Left ventricle myocardium inferior (tissue), 1 donor: ENCODE measurements at regions of chr17 and their contacts with region 1.

Region 1: GRCh38 chr17:56939901-56940343 is 20.9 kb downstream of the COIL start:
- DNase-seq: no peak
- H3K4me3 ChIP-seq: no peak overlapping the region
- H3K27ac ChIP-seq: no peak overlapping the region
- H3K4me1 ChIP-seq: peaks cover 9% of the 10 kb centered on the region
- H3K27me3 ChIP-seq: no peaks in the 10 kb centered on the region
- CTCF ChIP-seq: peak; percentile 77

Region 2: DNA sequence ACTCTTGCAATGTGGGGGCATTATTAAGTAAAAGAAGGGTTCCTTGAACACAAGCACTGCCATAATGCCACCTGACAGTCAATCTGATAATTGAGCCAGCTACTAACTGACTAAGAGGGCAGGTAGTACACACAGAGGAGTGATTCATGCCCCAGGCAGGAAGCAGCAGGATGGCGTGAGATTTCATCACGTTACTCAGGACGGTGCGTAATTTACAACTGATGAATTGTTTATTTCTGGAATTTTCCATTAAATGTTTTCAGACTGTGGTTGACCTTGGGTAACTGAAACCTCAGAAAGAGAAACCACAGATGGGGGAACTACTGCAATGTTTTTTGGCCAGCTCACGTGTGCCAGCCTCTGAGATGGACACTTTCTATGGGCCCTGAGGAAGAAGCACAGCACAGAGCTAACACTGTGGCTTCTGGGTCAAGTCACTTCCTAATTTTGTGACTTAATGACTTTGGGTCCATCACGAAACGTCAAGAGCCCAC is 152.9 kb before region 1 on chr17:
- intact Hi-C with region 1: no loop called
- DNase-seq: no peak
- H3K4me3 ChIP-seq: no peak overlapping the region
- H3K27ac ChIP-seq: no peak overlapping the region
- H3K4me1 ChIP-seq: no peaks in the 10 kb centered on the region
- H3K27me3 ChIP-seq: peaks cover 1% of the 10 kb centered on the region
- CTCF ChIP-seq: no peak

Region 3: GRCh38 chr17:56819431-56820145 is 120.3 kb before region 1 on chr17:
- intact Hi-C with region 1: loop called (anchors 5 kb)
- DNase-seq: no peak
- H3K4me3 ChIP-seq: no peak overlapping the region
- H3K27ac ChIP-seq: no peak overlapping the region
- H3K4me1 ChIP-seq: peaks cover 21% of the 10 kb centered on the region
- H3K27me3 ChIP-seq: no peaks in the 10 kb centered on the region
- CTCF ChIP-seq: peak; percentile 94